ENCODE measurements at regions of chr3 and their contacts with region 1.

Region 1: DNA sequence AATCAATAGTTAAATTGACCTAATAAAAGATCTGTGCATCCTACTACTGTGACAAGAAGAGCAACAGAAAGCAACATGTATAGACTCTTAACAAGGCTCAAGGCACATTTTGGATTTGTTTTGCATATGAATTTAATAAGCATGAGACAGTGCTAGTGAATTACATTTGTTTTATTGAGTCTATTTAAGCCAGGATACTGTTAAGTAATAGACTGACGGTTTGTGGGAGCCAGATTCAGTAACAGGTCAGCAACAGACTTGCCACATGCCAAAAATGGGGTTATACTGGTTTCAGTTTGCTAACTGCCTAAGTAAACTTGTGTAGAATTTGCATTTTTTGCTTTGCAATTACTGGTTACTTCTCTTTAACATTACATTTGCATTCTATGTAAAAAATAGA is 54.0 kb downstream of the MBNL1 start:
- DNase-seq: no peak
- ATAC-seq: peak in 2 of 4 donors; percentile 25 to 32
- H3K4me3 ChIP-seq: no peak overlapping the region
- H3K27ac ChIP-seq: peak overlapping the region in 10 of 12 donors; percentile 22 to 78 (median 60)
- H3K4me1 ChIP-seq: peaks cover 0 to 86% (median 70%) of the 10 kb centered on the region in 12 donors
- H3K27me3 ChIP-seq: no peaks in the 10 kb centered on the region
- CTCF ChIP-seq: no peak
- POLR2A ChIP-seq: no peak

Region 2: GRCh38 chr3:152071924-152072323 is 250.8 kb before region 1 on chr3:
- intact Hi-C with region 1: no loop called
- DNase-seq: no peak
- ATAC-seq: peak in 3 of 4 donors; percentile 52 to 68 (median 55)
- H3K4me3 ChIP-seq: no peak overlapping the region
- H3K27ac ChIP-seq: no peak overlapping the region
- H3K4me1 ChIP-seq: peaks cover 0 to 4% (median 0%) of the 10 kb centered on the region in 12 donors
- H3K27me3 ChIP-seq: no peaks in the 10 kb centered on the region
- CTCF ChIP-seq: peak; percentile 8 to 60 (median 41)
- POLR2A ChIP-seq: no peak

Region 3: DNA sequence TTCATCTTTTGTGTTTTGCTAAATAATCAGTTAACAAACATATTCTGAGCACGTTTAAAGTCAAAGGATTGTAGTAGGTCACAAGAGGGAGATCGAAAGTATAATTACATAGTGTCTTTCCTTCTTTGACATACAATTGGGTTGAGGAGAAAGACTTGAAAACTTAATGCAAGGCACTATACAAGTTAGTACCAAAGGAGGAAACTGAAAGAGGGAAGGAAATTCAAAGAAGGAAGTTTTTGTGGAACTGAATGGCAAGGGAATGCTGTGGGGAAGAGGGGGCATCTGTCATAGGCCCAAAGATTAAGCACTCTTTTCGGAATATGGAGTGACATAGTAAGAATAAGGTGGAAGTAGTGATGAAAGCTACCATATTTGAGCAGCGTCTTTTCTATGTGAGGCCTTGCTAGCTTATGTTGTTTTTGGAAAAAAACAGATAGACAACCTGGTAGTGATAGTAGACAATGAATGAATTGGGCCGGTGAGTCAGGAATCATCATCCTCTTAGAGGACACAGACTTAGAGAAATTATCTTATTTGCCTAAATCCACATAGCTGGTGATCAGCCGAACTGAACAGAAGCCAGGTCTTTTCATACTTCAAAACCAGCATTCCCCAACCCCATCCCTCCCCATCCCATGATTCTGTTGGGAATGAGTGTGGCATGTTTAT is 43.9 kb before region 1 on chr3:
- intact Hi-C with region 1: loop called in 1 of 10 experiments (anchors 5 kb)
- DNase-seq: no peak
- ATAC-seq: peak in 2 of 4 donors; percentile 40 to 44
- H3K4me3 ChIP-seq: peak overlapping the region in 1 of 12 donors; percentile 1
- H3K27ac ChIP-seq: peak overlapping the region in 10 of 12 donors; percentile 36 to 77 (median 56)
- H3K4me1 ChIP-seq: peaks cover 0 to 100% (median 96%) of the 10 kb centered on the region in 12 donors
- H3K27me3 ChIP-seq: no peaks in the 10 kb centered on the region
- CTCF ChIP-seq: no peak
- POLR2A ChIP-seq: no peak

Region 4: GRCh38 chr3:152382312-152383135 is 59.8 kb after region 1 on chr3:
- intact Hi-C with region 1: loop called in 3 of 10 experiments (anchors 5 to 10 kb)
- DNase-seq: no peak
- ATAC-seq: peak in 2 of 4 donors; percentile 32 to 48
- H3K4me3 ChIP-seq: peak overlapping the region in 10 of 12 donors; percentile 3 to 54 (median 36)
- H3K27ac ChIP-seq: peak overlapping the region; percentile 23 to 81 (median 72)
- H3K4me1 ChIP-seq: peaks cover 14 to 98% (median 87%) of the 10 kb centered on the region in 12 donors
- H3K27me3 ChIP-seq: no peaks in the 10 kb centered on the region
- CTCF ChIP-seq: no peak
- POLR2A ChIP-seq: no peak

Region 5: DNA sequence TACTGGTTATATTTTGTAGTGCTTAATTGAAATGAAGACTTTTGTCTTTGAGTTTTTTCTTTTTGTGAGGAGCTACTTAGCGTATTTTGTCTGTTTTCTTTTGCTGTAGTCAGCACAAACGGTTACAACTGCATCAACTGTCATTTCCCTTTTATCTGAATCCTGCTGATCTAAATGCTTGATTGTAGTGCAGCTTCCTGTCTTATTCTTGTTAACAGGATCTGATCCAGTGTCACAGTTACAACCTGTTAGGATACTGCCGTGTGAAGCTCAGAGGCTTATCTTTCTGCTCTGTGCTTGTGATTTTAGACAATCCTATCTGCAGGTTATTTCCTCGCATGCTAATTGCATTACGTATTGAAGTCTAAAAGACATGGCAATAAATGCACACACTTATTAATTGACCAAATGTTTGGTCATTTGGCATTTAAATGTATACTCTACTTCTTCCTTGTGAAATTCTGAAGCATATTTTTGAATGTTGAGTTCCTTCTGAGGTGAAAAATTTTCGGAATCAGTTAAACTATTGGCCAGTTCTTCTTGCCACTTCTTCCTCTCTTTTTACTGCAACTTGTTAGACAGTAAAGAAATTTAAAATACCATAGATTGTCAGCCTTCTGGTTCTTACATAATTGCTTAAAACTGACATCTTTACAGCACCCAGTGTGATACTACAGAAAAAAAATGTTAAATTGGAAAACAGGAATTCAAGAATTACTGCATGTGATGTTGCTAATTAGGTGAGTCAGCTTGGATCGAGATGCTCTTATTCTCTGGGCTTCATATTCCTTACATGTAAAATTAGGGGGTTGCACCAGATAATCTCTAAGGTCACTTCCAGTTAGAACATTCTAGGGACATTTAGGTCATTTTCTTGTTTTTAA is 114.2 kb after region 1 on chr3:
- intact Hi-C with region 1: loop called in 1 of 10 experiments (anchors 10 kb)
- DNase-seq: no peak
- ATAC-seq: peak in 3 of 4 donors; percentile 48 to 76 (median 55)
- H3K4me3 ChIP-seq: no peak overlapping the region
- H3K27ac ChIP-seq: peak overlapping the region in 11 of 12 donors; percentile 2 to 64 (median 48)
- H3K4me1 ChIP-seq: peaks cover 4 to 57% (median 36%) of the 10 kb centered on the region in 12 donors
- H3K27me3 ChIP-seq: no peaks in the 10 kb centered on the region
- CTCF ChIP-seq: no peak
- POLR2A ChIP-seq: no peak